Activated naive CD4-positive, alpha-beta T cell treated with anti-CD3 and anti-CD28 coated beads for 36 hours (primary cell): ENCODE measurements at regions of chr13 and their contacts with region 1.

Region 1: GRCh38 chr13:40597740-40598370 is 68.6 kb downstream of the FOXO1 start:
- DNase-seq: peak; percentile 24
- H3K4me3 Mint-ChIP-seq: peak overlapping the region; percentile 17
- H3K27ac Mint-ChIP-seq: peak overlapping the region; percentile 93
- H3K4me1 Mint-ChIP-seq: peaks cover 90% of the 10 kb centered on the region
- H3K27me3 Mint-ChIP-seq: no peaks in the 10 kb centered on the region

Region 2: DNA sequence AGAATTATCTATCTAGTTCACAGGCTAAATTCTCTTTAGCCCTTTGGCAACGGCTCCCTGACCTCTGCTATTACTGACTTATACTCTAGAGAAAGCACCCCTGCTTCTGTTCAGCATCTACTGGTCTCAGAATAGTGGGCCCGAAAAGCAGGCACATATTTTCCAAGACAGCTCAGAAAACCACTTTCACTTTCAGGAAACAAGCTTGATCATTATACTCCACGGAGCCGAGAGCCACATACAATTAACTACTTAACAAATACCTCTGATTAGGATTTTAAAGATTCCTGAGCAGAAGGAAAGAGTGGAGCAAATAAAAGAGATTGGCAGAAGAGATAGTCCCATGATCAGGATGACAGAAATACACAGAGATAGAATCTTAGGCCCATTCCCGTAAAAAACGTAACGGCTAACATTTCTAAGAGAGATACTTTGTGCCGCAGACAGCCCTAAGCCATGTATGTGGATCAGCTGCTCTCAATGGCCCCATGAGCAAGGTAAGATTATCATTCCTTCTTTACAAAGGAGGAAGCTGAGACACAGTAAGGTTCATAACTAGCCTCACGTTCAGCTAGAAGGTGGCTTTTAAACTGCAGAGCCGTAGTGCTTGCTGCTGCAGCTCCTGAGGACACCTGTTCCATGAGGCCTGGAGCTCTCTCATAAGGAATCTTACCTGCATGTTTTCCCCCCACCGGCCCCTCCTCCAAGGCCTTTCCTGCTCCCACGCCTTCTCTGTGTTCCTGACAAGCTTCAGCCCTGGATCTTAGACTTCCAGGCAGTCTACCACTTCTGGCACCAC is 158.7 kb before region 1 on chr13:
- CTCF ChIA-PET with region 1: interaction called, 3 read pairs
- intact Hi-C with region 1: loop called (anchors 2 kb)
- DNase-seq: peak; percentile 54
- H3K4me3 Mint-ChIP-seq: peak overlapping the region; percentile 33
- H3K27ac Mint-ChIP-seq: peak overlapping the region; percentile 46
- H3K4me1 Mint-ChIP-seq: peaks cover 40% of the 10 kb centered on the region
- H3K27me3 Mint-ChIP-seq: no peaks in the 10 kb centered on the region

Region 3: DNA sequence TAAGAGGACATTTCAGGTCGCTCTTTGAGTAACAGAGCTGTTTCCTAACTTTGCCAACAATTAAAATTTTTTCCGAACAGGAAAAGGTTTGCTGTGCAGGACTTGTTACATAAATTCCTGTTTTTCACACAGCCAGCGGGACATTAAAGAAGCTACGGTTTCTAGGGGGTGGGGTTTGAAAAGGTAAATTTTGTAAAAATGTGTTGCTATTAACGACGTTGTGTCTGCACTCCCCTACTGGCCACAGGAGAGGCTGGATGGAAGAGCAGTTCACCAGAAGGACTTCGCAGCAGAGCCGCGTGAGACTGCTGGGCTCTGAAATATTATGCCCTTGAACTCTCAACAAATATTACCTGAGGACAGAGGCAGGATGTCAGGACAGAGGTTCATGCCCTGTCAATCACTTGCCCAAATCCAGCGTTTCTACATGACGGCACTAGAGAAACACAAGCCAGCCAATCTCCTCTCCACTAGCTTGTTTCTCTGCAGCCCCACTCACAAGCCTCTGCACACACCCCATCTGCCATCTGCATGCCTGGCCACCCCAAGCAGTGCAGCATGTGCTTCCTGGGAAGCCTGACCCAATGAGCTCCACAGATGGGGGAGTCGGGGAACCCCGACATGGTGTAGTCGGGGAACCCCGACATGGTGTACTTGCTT is 33.4 kb before region 1 on chr13:
- CTCF ChIA-PET with region 1: interaction called, 5 read pairs
- intact Hi-C with region 1: loop called (anchors 2 kb)
- DNase-seq: peak; percentile 44
- H3K4me3 Mint-ChIP-seq: peak overlapping the region; percentile 30
- H3K27ac Mint-ChIP-seq: peak overlapping the region; percentile 82
- H3K4me1 Mint-ChIP-seq: peaks cover 84% of the 10 kb centered on the region
- H3K27me3 Mint-ChIP-seq: no peaks in the 10 kb centered on the region

Region 4: GRCh38 chr13:40644838-40645604 is 47.2 kb after region 1 on chr13:
- CTCF ChIA-PET with region 1: no interaction called
- intact Hi-C with region 1: loop called (anchors 2 kb)
- DNase-seq: peak; percentile 59
- H3K4me3 Mint-ChIP-seq: peak overlapping the region; percentile 38
- H3K27ac Mint-ChIP-seq: peak overlapping the region; percentile 89
- H3K4me1 Mint-ChIP-seq: peaks cover 92% of the 10 kb centered on the region
- H3K27me3 Mint-ChIP-seq: no peaks in the 10 kb centered on the region

Region 5: DNA sequence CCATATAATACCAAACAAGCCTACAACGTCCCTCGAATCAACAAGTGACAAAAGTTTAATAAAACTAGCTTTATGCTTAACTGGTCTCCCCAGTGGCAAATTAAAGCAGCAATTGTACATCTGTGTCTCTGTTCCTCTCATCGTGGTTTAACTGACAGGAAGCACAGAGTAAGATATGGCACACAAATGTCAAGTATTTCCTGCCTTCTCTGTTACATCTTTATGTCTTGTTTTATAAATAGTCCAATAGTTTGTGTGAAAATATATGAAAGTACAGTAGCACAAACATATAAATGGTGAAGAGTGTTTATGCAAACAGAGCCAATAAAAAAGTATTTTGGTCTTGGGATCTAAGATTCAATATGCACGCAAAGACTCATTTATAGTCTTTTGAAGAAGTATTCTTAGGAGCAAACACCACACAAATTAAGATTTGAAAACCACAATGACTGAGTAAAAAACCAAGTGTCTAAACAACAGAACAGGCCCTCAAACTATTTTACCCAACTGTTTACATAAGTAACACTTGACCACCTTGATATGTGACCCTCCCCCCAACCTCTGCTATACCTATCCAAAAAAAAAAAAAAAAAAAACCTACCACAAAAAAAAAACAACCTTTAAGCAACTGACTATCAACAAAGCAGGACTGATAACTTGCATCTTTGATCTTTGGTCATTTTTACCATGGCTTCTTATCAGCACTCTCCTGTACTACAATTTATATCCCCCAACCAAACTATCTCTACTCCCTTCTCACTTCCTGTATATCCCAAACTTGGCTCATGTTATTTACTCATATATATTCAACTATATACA is 407.2 kb after region 1 on chr13:
- CTCF ChIA-PET with region 1: no interaction called
- intact Hi-C with region 1: loop called (anchors 5 kb)
- DNase-seq: no peak
- H3K4me3 Mint-ChIP-seq: peak overlapping the region; percentile 55
- H3K27ac Mint-ChIP-seq: peak overlapping the region; percentile 93
- H3K4me1 Mint-ChIP-seq: peaks cover 70% of the 10 kb centered on the region
- H3K27me3 Mint-ChIP-seq: no peaks in the 10 kb centered on the region

Region 6: DNA sequence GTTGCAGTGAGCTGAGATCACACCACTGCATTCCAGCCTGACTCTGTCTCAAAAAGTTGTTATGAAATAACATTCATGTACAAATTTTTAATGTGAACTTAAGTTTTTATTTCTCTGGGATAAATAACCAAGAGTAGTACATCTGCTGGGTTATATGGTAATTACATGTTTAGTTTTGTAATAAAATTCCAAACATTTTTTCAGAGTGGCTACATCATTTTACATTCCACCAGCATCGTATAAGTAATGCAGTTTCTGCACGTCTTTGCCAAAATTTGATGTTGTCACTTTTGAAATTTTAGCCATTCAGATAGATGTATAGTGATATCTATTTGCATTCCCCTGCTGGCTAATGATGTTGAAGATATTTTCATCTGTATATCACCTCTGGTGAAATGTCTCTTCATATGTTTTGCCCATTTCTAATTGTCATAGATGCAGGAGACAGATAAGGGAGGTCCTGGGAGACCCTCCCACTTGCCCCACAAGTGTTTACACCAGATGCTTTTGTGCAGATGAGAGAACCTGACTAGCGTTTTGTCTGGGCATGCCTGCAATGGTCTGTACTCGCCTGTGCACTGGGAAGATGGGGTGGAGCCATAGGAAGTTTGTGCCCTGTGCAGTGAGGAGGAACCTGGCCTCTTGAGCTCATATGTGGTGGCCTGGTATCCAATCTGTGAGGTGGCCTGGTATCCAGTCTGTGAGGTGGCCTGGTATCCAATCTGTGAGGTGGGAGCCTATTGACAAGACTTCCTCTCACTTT is 547.5 kb after region 1 on chr13:
- CTCF ChIA-PET with region 1: no interaction called
- intact Hi-C with region 1: no loop called
- DNase-seq: no peak
- H3K4me3 Mint-ChIP-seq: no peak overlapping the region
- H3K27ac Mint-ChIP-seq: no peak overlapping the region
- H3K4me1 Mint-ChIP-seq: no peaks in the 10 kb centered on the region
- H3K27me3 Mint-ChIP-seq: no peaks in the 10 kb centered on the region